ENCODE measurements at regions of chr5 and their contacts with region 1.

Region 1: GRCh38 chr5:149434162-149435014 is 55.3 kb upstream of the IL17B start:
- DNase-seq: peak; percentile 59 to 77
- H3K4me3 ChIP-seq: no peak overlapping the region
- H3K4me3 Mint-ChIP-seq: no peak overlapping the region
- H3K27ac Mint-ChIP-seq: no peak overlapping the region
- H3K4me1 ChIP-seq: no peaks in the 10 kb centered on the region
- H3K4me1 Mint-ChIP-seq: no peaks in the 10 kb centered on the region
- H3K27me3 ChIP-seq: no peaks in the 10 kb centered on the region
- H3K27me3 Mint-ChIP-seq: no peaks in the 10 kb centered on the region
- CTCF ChIP-seq: peak; percentile 90 to 94

Region 2: DNA sequence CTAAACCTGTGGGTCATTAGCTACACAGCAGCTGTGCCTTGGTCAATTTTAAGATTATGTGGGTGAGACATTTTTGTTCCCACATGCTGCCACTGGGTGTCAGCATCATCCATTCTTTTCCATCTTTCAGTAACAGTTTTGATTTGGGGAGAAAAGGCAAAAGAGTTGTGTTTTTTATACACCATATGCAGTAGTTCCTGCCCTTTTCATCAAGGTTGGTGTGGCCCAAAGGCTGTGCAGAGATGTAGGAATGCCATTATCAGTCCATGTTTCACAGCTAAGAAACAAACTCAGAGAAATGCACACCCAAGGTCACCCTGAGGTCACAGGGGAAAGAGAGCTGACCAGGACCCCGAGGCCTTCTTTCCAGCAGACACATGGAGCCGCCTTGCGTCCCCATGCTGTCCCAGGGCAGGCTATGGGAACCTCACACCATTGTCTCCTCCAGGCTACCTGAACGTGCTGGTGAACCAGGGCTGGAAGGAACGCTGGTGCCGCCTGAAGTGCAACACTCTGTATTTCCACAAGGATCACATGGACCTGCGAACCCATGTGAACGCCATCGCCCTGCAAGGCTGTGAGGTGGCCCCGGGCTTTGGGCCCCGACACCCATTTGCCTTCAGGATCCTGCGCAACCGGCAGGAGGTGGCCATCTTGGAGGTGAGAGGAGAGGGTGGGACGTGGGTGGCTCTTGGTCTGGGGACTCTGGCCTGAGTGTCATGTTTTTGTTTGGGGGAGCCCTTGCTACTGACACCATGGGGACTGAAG is 116.9 kb before region 1 on chr5:
- CTCF ChIA-PET with region 1: interaction called, 6 read pairs
- POLR2A ChIA-PET with region 1: no interaction called
- intact Hi-C with region 1: loop called (anchors 1 kb)
- DNase-seq: peak in 1 of 2 experiments; percentile 50
- H3K4me3 ChIP-seq: no peak overlapping the region
- H3K4me3 Mint-ChIP-seq: no peak overlapping the region
- H3K27ac Mint-ChIP-seq: no peak overlapping the region
- H3K4me1 ChIP-seq: peaks cover 16% of the 10 kb centered on the region
- H3K4me1 Mint-ChIP-seq: peaks cover 11% of the 10 kb centered on the region
- H3K27me3 ChIP-seq: no peaks in the 10 kb centered on the region
- H3K27me3 Mint-ChIP-seq: peaks cover 7% of the 10 kb centered on the region
- CTCF ChIP-seq: peak; percentile 75 to 82

Region 3: DNA sequence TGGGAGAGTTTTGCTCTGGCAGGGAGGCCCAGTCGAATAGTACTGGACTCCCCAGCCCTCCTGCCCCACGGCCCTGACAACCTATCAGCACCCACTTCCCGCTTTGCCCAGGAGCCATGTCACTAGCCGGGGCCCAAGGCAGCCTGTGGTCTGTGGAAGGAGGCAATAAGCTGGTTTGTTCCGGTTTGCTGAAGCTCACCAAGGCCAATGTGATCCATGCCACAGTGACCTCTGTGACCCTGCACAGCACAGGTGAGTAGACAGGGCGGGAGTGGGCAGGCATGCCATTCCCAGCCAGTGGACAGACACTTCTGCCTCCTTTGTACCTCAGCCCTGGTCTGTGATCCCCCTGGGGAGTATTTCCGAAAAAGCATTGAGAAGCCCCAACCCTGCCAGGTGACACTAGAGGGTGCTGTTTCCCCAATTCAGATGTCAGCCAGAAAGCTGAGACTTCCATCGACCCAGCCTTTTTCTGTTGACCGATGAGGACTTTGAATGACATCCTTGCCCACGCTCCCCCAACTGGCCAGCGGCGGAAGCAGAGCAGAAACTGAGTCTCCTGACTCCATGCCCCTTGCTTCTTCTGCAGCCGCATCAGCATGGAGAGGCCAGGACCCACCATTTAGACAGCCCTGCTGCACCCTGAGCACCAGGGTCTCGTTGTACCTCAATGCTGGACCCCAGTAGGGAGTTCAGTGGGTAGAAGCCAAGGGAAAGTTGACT is 67.0 kb before region 1 on chr5:
- CTCF ChIA-PET with region 1: interaction called, 4 read pairs
- POLR2A ChIA-PET with region 1: no interaction called
- intact Hi-C with region 1: loop called (anchors 1 kb)
- DNase-seq: peak; percentile 87 to 88
- H3K4me3 ChIP-seq: no peak overlapping the region
- H3K4me3 Mint-ChIP-seq: no peak overlapping the region
- H3K27ac Mint-ChIP-seq: no peak overlapping the region
- H3K4me1 ChIP-seq: peaks cover 4% of the 10 kb centered on the region; the same call in 1 of the 2 replicates
- H3K4me1 Mint-ChIP-seq: no peaks in the 10 kb centered on the region
- H3K27me3 ChIP-seq: no peaks in the 10 kb centered on the region
- H3K27me3 Mint-ChIP-seq: no peaks in the 10 kb centered on the region
- CTCF ChIP-seq: peak; percentile 86 to 91

Region 4: DNA sequence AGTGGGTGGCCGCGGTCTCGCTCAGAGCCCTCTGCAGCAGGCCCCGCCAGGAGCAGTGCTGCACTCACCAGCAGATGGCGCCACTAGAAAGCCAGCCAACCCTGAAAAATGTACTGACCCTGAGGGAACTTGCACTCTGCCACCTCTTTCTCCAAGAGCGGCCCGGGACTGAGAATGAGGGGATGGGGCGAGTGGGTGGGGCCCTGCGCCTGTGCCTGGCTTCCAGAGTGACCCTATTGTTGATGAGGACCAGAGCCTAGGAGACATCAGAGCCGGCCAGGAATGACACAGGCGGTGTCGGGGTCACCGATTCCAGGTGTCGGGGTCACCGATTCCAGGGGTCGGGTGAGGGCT is 52.4 kb before region 1 on chr5:
- CTCF ChIA-PET with region 1: interaction called, 15 read pairs
- POLR2A ChIA-PET with region 1: no interaction called
- intact Hi-C with region 1: loop called (anchors 1 kb)
- DNase-seq: peak; percentile 79 to 85
- H3K4me3 ChIP-seq: no peak overlapping the region
- H3K4me3 Mint-ChIP-seq: no peak overlapping the region
- H3K27ac Mint-ChIP-seq: no peak overlapping the region
- H3K4me1 ChIP-seq: 0 out of 2 replicates have a peak, but pooled peaks cover 6% of the 10 kb centered on the region
- H3K4me1 Mint-ChIP-seq: peaks cover 11% of the 10 kb centered on the region
- H3K27me3 ChIP-seq: no peaks in the 10 kb centered on the region
- H3K27me3 Mint-ChIP-seq: no peaks in the 10 kb centered on the region
- CTCF ChIP-seq: peak; percentile 94 to 96

Region 5: GRCh38 chr5:149561848-149562247 is 127.5 kb after region 1 on chr5:
- CTCF ChIA-PET with region 1: no interaction called
- POLR2A ChIA-PET with region 1: no interaction called
- intact Hi-C with region 1: loop called (anchors 2 kb)
- DNase-seq: no peak
- H3K4me3 ChIP-seq: no peak overlapping the region
- H3K4me3 Mint-ChIP-seq: no peak overlapping the region
- H3K27ac Mint-ChIP-seq: peak overlapping the region; percentile 26
- H3K4me1 ChIP-seq: peaks cover 33% of the 10 kb centered on the region
- H3K4me1 Mint-ChIP-seq: peaks cover 18% of the 10 kb centered on the region
- H3K27me3 ChIP-seq: no peaks in the 10 kb centered on the region
- H3K27me3 Mint-ChIP-seq: no peaks in the 10 kb centered on the region
- CTCF ChIP-seq: no peak

Measured in Caco-2 (cell line).